ENCODE measurements at regions of chr11 and their contacts with region 1.

Region 1: GRCh38 chr11:95849087-95849825 is 59.0 kb downstream of the CEP57 start:
- DNase-seq: peak; percentile 82
- H3K4me3 ChIP-seq: no peak overlapping the region
- H3K27ac ChIP-seq: no peak overlapping the region
- H3K4me1 ChIP-seq: no peaks in the 10 kb centered on the region
- H3K27me3 ChIP-seq: no peaks in the 10 kb centered on the region
- CTCF ChIP-seq: peak; percentile 46 to 54
- POLR2A ChIP-seq: no peak

Region 2: GRCh38 chr11:95835768-95836488 is 13.3 kb before region 1 on chr11:
- CTCF ChIA-PET with region 1: interaction called, 30 read pairs
- POLR2A ChIA-PET with region 1: no interaction called
- dilution Hi-C with region 1: no loop called
- intact Hi-C with region 1: no loop called
- DNase-seq: peak; percentile 77
- H3K4me3 ChIP-seq: no peak overlapping the region
- H3K27ac ChIP-seq: no peak overlapping the region
- H3K4me1 ChIP-seq: no peaks in the 10 kb centered on the region
- H3K27me3 ChIP-seq: no peaks in the 10 kb centered on the region
- CTCF ChIP-seq: peak; percentile 71 to 88
- POLR2A ChIP-seq: no peak

Region 3: GRCh38 chr11:95968585-95968984 is 119.3 kb after region 1 on chr11:
- CTCF ChIA-PET with region 1: interaction called, 33 read pairs
- POLR2A ChIA-PET with region 1: no interaction called
- dilution Hi-C with region 1: no loop called
- intact Hi-C with region 1: loop called (anchors 1 kb)
- DNase-seq: peak; percentile 13
- H3K4me3 ChIP-seq: no peak overlapping the region
- H3K27ac ChIP-seq: no peak overlapping the region
- H3K4me1 ChIP-seq: no peaks in the 10 kb centered on the region
- H3K27me3 ChIP-seq: no peaks in the 10 kb centered on the region
- CTCF ChIP-seq: peak; percentile 16 to 23
- POLR2A ChIP-seq: no peak

Region 4: DNA sequence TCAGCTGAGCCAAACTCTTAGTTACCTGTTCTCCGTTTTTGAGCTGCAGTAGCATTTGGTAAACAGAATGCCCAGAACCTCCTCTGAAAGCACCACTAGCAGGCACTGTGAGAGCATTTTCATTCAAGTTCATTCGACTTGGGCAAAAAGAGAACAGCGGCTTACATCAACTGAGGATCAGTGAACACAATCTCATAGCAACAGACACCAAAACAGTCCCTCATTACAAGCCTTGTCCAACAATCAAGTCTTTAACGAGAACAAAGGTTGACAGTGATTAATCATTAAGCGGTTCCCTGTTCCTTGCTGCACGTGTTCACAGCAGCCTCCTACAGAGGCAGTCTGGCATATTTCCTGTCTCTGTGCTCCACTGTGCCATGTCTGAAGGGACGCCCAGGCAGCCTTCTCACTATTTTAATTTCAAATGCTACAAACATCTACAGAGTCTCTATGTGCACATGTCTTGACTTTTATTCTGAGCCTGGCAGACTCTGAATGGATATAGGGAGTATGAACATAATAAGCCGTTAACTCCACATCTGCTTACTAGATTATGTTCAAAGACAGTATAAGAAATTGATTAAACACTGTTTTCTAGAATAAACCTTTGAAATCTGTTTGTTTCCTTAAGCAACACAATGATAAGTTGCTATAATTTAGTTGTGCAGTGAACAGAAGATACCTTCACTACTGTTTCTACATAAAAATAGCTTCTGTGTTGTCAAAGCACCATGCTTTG is 163.0 kb after region 1 on chr11:
- CTCF ChIA-PET with region 1: interaction called, 10 read pairs
- POLR2A ChIA-PET with region 1: no interaction called
- dilution Hi-C with region 1: no loop called
- intact Hi-C with region 1: no loop called
- DNase-seq: peak; percentile 85
- H3K4me3 ChIP-seq: no peak overlapping the region
- H3K27ac ChIP-seq: no peak overlapping the region
- H3K4me1 ChIP-seq: peaks cover 8% of the 10 kb centered on the region
- H3K27me3 ChIP-seq: no peaks in the 10 kb centered on the region
- CTCF ChIP-seq: peak; percentile 50 to 58
- POLR2A ChIP-seq: no peak

Region 5: GRCh38 chr11:96424693-96425092 is 575.4 kb after region 1 on chr11:
- CTCF ChIA-PET with region 1: interaction called, 28 read pairs
- POLR2A ChIA-PET with region 1: no interaction called
- dilution Hi-C with region 1: no loop called
- intact Hi-C with region 1: no loop called
- DNase-seq: peak; percentile 51
- H3K4me3 ChIP-seq: no peak overlapping the region
- H3K27ac ChIP-seq: no peak overlapping the region
- H3K4me1 ChIP-seq: peaks cover 2% of the 10 kb centered on the region
- H3K27me3 ChIP-seq: peaks cover 0 to 17% of the 10 kb centered on the region in 2 experiments
- CTCF ChIP-seq: no peak
- POLR2A ChIP-seq: no peak